Breast epithelium (tissue), 4 donors: ENCODE measurements at regions of chr1 and their contacts with region 1.

Region 1: DNA sequence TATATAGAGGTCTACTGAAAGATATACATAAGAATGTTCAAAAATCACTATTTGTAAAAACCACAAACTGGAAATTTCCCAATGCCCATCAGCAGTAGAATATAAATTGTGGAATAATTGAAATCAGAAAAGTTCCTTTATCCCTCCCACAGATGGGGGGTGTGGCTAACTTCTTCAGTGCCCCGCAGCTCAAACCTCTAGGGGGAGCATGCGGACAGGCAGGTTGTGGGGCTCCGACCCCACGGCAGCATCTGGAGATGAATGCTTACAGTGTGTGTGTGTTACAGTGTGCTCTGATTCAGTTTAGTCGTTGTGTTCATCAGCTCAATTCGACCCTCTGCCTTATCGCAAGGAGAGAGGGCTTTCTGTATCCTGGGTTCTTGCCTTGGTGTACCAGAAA is 262.1 kb upstream of the LRRC7 start:
- DNase-seq: no peak
- H3K4me3 ChIP-seq: no peak overlapping the region
- H3K27ac ChIP-seq: no peak overlapping the region
- H3K4me1 ChIP-seq: no peaks in the 10 kb centered on the region
- H3K27me3 ChIP-seq: no peaks in the 10 kb centered on the region
- CTCF ChIP-seq: no peak
- POLR2A ChIP-seq: no peak

Region 2: GRCh38 chr1:71049951-71050598 is 1744.5 kb after region 1 on chr1:
- intact Hi-C with region 1: loop called (anchors 10 kb)
- DNase-seq: no peak
- H3K4me3 ChIP-seq: no peak overlapping the region
- H3K27ac ChIP-seq: no peak overlapping the region
- H3K4me1 ChIP-seq: no peaks in the 10 kb centered on the region
- H3K27me3 ChIP-seq: peaks cover 0 to 3% of the 10 kb centered on the region in 2 donors
- CTCF ChIP-seq: peak; percentile 68 to 78 (median 75)
- POLR2A ChIP-seq: no peak